Activated naive CD8-positive, alpha-beta T cell treated with anti-CD3 and anti-CD28 coated beads, Interleukin-2, amount 10 ng/mL, durations not matched to agents 7 days and 5 days (primary cell): ENCODE measurements at regions of chr11 and their contacts with region 1.

Region 1: GRCh38 chr11:615504-616319 is at the start of gene IRF7:
- DNase-seq: peak; percentile 94
- ATAC-seq: peak; percentile 77
- H3K4me3 Mint-ChIP-seq: peak within 1 kb of the TSS; percentile 93
- H3K27ac Mint-ChIP-seq: peak within 1 kb of the TSS; percentile 97
- H3K4me1 Mint-ChIP-seq: peaks cover 13% of the 10 kb centered on the region
- H3K27me3 Mint-ChIP-seq: no peaks in the 10 kb centered on the region
- total RNA-seq, gene IRF7: 160 to 165 TPM

Region 2: DNA sequence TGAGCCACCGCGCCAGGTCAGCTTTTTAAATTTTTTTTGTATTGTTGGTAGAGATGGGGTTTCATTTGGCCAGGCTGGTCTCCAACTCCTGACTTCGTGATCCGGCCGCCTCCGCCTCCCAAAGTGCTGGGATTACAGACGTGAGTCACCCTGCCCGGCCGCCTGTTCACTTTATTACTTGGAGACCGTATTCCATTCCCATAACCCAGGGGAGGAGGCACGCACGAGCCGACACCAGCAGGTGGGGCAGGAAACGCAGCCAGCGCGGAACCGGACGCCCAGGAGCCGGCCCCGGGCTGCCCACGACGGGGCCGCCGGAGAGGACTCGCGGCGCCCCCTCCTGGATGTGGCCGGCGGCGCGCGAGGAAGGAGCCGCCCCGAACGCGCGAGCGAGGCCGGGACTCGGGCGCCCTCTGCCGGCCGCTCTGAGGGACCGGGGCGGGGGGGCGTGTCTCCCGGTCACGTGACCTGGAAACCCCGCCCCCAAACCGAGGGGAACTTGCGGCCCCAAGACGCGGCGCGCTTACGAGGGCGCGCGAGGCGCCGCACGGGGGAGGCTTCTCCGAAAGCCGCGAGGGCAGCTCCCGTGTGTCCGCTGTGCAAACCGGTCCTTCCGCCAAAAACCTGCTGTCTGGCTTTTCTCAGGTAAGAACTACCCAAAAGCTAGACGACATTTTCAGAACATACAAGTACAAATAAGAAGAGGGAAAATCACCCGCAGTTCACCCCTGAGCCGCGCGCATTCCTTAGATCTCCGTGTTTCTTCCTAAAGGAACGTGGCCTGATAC is 97.1 kb before region 1 on chr11:
- POLR2A ChIA-PET with region 1: no interaction called
- DNase-seq: peak; percentile 96
- ATAC-seq: peak; percentile 97
- H3K4me3 Mint-ChIP-seq: peak overlapping the region; percentile 86
- H3K27ac Mint-ChIP-seq: peak overlapping the region; percentile 84
- H3K4me1 Mint-ChIP-seq: peaks cover 4% of the 10 kb centered on the region
- H3K27me3 Mint-ChIP-seq: no peaks in the 10 kb centered on the region

Region 3: DNA sequence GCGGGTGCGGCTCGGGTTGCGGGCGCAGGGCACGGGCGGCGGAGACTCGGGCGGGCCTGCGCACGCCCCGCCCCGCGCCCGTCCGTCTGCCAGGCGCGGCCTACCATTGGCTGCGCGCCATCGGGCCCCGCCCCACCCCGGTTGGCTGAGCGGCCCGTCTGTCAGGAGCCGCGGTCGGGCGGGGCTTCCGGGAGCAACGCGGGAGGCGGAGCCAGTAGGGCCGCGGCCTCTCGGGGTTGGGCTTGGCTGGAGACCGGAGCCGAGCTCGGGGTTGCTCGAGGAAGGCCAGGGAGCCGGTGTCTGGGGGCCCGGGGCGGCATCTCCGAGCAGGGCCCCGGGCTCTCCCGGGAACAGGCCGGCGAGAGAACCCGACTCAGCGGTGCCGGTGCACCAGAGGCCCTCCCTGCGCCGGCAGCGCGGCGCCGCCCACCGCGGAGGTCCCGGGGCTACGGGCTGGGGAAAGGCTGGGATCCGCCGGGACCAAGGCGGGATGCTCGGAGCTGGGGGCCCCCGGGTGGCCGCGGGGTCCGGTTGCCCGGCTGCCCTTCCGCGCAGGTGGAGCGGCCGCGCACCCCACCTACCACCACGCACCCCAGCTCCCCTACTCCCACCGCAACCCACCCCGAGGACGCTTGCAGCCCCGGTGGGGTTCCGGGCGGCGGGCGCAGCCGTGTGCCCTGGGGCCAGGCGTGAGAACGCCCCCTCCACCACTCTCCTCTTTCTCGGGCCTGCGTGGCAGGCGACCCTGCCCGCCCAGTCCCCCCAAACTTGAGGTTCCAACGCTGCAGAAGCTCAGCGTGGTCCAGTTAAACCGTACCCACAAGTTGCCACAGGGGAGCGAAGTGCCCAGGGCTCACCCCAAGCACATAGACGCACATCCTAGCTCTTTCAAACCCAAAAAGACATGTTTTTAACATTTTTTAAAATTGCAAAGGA is 79.9 kb before region 1 on chr11 and contains the start of gene HRAS:
- POLR2A ChIA-PET with region 1: interaction called, 14 read pairs
- DNase-seq: peak; percentile 99
- ATAC-seq: peak; percentile 87
- H3K4me3 Mint-ChIP-seq: peak within 1 kb of the TSS; percentile 89
- H3K27ac Mint-ChIP-seq: peak within 1 kb of the TSS; percentile 92
- H3K4me1 Mint-ChIP-seq: peaks cover 7% of the 10 kb centered on the region
- H3K27me3 Mint-ChIP-seq: no peaks in the 10 kb centered on the region
- total RNA-seq, gene HRAS: 47.6 to 49.9 TPM

Region 4: GRCh38 chr11:554824-555472 is 60.8 kb before region 1 on chr11:
- POLR2A ChIA-PET with region 1: interaction called, 18 read pairs
- DNase-seq: peak; percentile 84
- ATAC-seq: peak; percentile 71
- H3K4me3 Mint-ChIP-seq: peak overlapping the region; percentile 61
- H3K27ac Mint-ChIP-seq: no peak overlapping the region
- H3K4me1 Mint-ChIP-seq: peaks cover 4% of the 10 kb centered on the region
- H3K27me3 Mint-ChIP-seq: peaks cover 18% of the 10 kb centered on the region

Region 5: GRCh38 chr11:568306-569157 is 47.2 kb before region 1 on chr11:
- POLR2A ChIA-PET with region 1: interaction called, 11 read pairs
- DNase-seq: peak; percentile 99
- ATAC-seq: peak; percentile 93
- H3K4me3 Mint-ChIP-seq: peak overlapping the region; percentile 87
- H3K27ac Mint-ChIP-seq: peak overlapping the region; percentile 83
- H3K4me1 Mint-ChIP-seq: peaks cover 4% of the 10 kb centered on the region
- H3K27me3 Mint-ChIP-seq: peaks cover 5% of the 10 kb centered on the region

Region 6: GRCh38 chr11:575996-576768 is 39.5 kb before region 1 on chr11 and contains the start of gene PHRF1:
- POLR2A ChIA-PET with region 1: interaction called, 23 read pairs
- DNase-seq: peak; percentile 96
- ATAC-seq: peak; percentile 85
- H3K4me3 Mint-ChIP-seq: peak within 1 kb of the TSS; percentile 93
- H3K27ac Mint-ChIP-seq: peak within 1 kb of the TSS; percentile 100
- H3K4me1 Mint-ChIP-seq: peaks cover 36% of the 10 kb centered on the region
- H3K27me3 Mint-ChIP-seq: peaks cover 16% of the 10 kb centered on the region
- total RNA-seq, gene PHRF1: 55.4 to 58.9 TPM

Region 7: DNA sequence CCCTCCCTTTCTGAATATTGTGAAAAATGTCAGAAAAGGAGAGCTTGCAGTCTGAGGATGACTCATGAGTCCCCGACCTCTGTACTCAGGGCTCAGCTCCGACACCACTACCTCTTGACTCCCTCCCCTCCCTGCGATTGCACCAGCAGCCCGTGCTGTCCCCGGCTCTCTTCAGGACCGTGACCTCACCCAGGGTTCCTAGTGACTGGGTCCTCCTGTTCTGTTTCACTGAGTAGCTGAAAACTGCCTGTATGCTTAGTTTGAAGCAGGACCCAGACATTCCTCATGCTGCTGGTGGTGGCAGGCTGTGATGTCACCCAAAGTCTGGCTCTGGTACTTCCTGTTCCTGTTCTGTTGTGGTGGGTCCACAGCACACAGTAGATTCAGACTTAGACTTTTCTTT is 27.7 kb before region 1 on chr11:
- POLR2A ChIA-PET with region 1: interaction called, 22 read pairs
- DNase-seq: peak; percentile 78
- ATAC-seq: peak; percentile 95
- H3K4me3 Mint-ChIP-seq: peak overlapping the region; percentile 86
- H3K27ac Mint-ChIP-seq: peak overlapping the region; percentile 100
- H3K4me1 Mint-ChIP-seq: peaks cover 27% of the 10 kb centered on the region
- H3K27me3 Mint-ChIP-seq: no peaks in the 10 kb centered on the region

Region 8: DNA sequence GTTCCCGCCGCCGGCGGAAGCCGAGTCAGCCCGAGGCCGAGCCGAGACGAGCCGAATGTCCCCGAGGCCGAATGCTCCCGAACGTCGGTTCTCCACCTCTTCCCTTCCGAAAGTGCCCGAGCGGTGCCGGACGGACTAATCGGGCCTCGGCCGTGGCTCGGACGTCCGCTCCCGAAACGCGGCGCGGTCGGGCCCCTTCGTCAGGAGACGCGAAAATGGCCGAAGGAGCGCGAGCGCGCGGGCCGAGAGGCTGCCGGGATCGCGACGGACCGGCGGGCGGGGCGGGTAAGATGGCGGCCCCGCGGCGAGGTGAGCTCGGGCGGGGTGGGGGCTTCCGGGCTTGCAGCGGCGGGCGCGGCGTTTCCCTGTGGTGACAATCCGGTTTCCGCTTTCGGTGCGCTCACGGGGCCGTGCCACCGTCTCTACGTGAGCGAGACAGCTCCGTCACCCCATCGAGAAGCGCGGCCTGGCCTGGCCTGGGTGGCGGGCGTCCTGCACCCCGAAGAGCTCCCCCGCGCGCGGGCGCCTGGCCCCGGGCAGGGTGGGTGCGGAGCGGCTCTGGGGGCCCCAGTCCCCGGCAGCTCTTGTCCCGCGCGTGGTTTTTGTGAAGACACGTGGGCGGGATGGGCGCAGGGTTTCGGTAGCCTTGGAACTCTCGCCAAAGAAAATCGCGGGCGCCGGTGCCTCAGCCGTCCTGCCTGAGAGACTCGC is 80.0 kb after region 1 on chr11 and contains the start of gene TMEM80:
- POLR2A ChIA-PET with region 1: interaction called, 12 read pairs
- DNase-seq: peak; percentile 97
- ATAC-seq: peak; percentile 74
- H3K4me3 Mint-ChIP-seq: peak within 1 kb of the TSS; percentile 89
- H3K27ac Mint-ChIP-seq: peak within 1 kb of the TSS; percentile 94
- H3K4me1 Mint-ChIP-seq: peaks cover 41% of the 10 kb centered on the region
- H3K27me3 Mint-ChIP-seq: no peaks in the 10 kb centered on the region
- total RNA-seq, gene TMEM80: 38.9 to 39.7 TPM